ENCODE measurements at regions of chr1 and their contacts with region 1.

Region 1: GRCh38 chr1:94854458-94855306 is 34.5 kb downstream of the SLC44A3 start:
- DNase-seq: peak; percentile 83
- H3K4me3 ChIP-seq: peak overlapping the region; percentile 58
- H3K27ac ChIP-seq: peak overlapping the region; percentile 69
- H3K27me3 ChIP-seq: no peaks in the 10 kb centered on the region
- CTCF ChIP-seq: peak; percentile 96

Region 2: DNA sequence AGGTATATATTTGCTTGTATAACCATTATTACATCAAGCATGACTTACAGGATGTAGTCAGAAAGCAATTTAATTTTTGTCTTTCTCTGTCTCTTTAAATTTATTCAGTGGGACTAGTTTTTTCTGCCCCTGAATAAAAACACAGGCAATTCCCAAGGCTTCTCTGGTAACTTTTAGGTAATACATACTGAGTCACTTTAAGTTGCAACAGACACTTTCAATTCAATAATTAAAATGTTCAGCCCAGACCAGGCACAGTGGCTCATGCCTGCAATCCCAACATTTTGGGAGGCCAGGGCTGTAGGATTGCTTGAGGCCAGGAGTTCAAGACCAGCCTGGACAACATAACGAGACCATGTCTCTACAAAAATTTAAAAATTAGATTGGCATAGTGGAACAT is 22.2 kb before region 1 on chr1:
- CTCF ChIA-PET with region 1: interaction called, 12 read pairs
- POLR2A ChIA-PET with region 1: no interaction called
- DNase-seq: no peak
- H3K4me3 ChIP-seq: no peak overlapping the region
- H3K27ac ChIP-seq: no peak overlapping the region
- H3K27me3 ChIP-seq: no peaks in the 10 kb centered on the region
- CTCF ChIP-seq: no peak

Region 3: GRCh38 chr1:94892604-94893254 is 38.0 kb after region 1 on chr1:
- CTCF ChIA-PET with region 1: interaction called, 13 read pairs
- POLR2A ChIA-PET with region 1: interaction called, 3 read pairs
- DNase-seq: no peak
- H3K4me3 ChIP-seq: no peak overlapping the region
- H3K27ac ChIP-seq: no peak overlapping the region
- H3K27me3 ChIP-seq: no peaks in the 10 kb centered on the region
- CTCF ChIP-seq: no peak

Region 4: GRCh38 chr1:94909486-94909885 is 54.8 kb after region 1 on chr1:
- CTCF ChIA-PET with region 1: interaction called, 14 read pairs
- POLR2A ChIA-PET with region 1: interaction called, 4 read pairs
- DNase-seq: no peak
- H3K4me3 ChIP-seq: no peak overlapping the region
- H3K27ac ChIP-seq: no peak overlapping the region
- H3K27me3 ChIP-seq: no peaks in the 10 kb centered on the region
- CTCF ChIP-seq: no peak

Region 5: DNA sequence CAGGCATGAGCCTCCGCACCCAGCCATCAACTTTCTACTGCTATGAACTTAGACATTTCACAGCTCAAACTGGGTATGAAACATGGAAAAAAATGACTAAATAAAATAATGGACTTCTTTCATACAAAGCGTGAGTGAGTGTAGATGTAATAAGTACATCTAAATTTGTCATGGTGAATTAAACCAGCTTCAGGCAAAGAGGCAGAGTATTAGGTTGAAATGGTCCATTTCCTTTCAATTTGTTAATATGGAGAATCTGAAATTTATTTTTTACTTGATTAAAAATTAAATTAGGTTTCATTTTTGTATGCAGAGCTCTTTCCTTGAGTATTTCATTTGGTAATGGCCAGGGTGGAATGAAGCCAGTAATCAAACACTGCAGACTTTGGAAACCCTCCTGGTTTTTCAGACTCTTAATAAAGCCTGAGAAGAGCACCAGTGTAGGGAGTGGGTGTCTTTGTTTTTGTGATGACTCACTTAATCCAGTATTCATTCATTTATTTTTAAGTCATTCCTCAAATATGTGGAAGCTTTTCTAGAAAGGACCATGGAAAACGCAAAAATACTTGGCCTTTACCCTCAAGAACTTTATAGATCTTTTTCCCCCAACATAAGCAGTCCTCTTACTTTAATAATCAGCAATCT is 168.8 kb after region 1 on chr1:
- CTCF ChIA-PET with region 1: interaction called, 12 read pairs
- POLR2A ChIA-PET with region 1: no interaction called
- DNase-seq: peak; percentile 76
- H3K4me3 ChIP-seq: no peak overlapping the region
- H3K27ac ChIP-seq: peak overlapping the region; percentile 69
- H3K27me3 ChIP-seq: no peaks in the 10 kb centered on the region
- CTCF ChIP-seq: no peak

Measured in AG04450 (cell line).